Esophagus muscularis mucosa (tissue), 4 donors: ENCODE measurements at regions of chr17 and their contacts with region 1.

Region 1: DNA sequence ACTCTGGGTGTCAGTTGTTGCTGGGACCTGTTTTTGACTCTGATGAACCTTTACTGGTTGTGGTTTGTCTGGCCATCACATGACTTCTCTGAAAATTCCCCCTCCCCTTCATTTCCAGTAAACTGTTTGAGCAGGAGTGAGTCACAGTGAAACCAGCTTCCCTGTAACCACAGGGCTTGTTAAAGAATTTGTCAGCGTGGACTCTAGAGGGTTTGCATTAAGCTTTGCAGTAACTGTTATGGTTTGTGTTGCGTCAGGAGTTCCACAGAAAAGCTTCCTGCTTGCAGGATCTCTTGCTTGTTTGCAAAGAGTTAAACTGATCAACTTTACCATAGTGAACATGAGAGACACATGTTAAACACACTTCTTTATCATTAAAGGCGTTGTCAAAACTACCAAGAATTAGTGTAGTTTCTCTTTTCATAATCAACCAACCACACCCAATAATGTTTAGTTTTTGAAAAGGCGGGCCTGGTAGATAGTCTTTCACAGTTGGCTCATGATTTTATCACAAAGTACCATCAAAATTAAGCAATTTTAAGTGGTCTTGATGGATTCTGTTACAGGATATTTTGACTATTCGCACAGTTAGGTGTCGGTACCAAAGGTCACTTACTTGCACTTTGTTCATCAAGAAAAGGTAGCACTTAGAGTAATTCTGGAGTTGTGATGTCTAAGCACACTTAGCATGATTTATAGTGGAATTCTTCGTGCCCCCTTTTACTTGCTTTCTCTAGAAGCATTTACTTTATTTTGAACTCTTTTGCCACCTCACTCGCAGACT is 79.3 kb downstream of the VMP1 start:
- DNase-seq: peak; percentile 92
- H3K4me3 ChIP-seq: peak overlapping the region; percentile 14 to 34 (median 32)
- H3K27ac ChIP-seq: peak overlapping the region; percentile 71 to 83 (median 77)
- H3K4me1 ChIP-seq: peaks cover 42 to 69% (median 59%) of the 10 kb centered on the region in 4 donors
- H3K27me3 ChIP-seq: no peaks in the 10 kb centered on the region
- CTCF ChIP-seq: no peak
- EP300 ChIP-seq: peak; percentile 94
- POLR2A ChIP-seq: peak; percentile 39

Region 2: DNA sequence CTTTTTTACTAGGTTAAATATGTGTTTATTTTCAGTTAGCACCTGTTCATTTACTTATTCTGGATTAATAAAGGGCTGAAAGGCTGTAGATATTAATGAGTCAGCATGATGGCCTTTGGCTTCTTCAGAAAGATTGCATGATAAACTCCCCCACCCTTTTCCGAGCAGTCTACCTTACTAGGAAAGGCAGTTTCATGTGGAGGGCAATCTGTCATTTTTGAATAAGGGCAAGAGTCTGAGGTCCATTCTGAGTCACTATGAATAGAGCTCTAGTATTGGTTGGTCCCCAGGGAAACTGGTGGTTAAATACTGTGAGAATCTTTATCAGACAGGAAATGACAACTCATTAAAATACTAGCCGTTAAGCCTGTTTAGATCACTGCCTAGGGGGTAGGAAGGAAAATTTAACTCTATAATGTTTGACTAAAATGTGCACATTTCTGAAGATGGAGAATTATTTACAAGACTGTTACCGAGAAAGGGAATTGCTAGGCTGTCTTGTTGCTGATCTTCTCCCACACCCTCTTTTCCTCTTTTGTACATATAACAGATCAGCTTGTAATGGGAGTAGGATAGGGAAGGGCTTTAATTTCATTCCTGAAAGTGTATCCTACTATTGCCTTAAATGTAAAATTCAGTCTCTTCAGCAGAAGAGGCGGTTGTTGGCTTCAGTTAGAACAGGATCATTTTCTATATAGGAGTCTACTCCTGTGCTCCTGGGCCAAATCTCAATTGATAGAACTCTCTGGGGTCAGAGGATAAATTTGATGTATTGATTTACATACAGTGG is 42.7 kb after region 1 on chr17:
- intact Hi-C with region 1: loop called (anchors 5 kb)
- DNase-seq: no peak
- H3K4me3 ChIP-seq: peak overlapping the region in 2 of 4 donors; percentile 4 to 19
- H3K27ac ChIP-seq: peak overlapping the region; percentile 75 to 83 (median 80)
- H3K4me1 ChIP-seq: peaks cover 37 to 84% (median 80%) of the 10 kb centered on the region in 4 donors
- H3K27me3 ChIP-seq: no peaks in the 10 kb centered on the region
- CTCF ChIP-seq: no peak
- EP300 ChIP-seq: peak; percentile 46
- POLR2A ChIP-seq: no peak

Region 3: GRCh38 chr17:59846394-59847165 is 59.9 kb after region 1 on chr17:
- intact Hi-C with region 1: loop called (anchors 5 kb)
- DNase-seq: peak; percentile 95
- H3K4me3 ChIP-seq: peak overlapping the region in 3 of 4 donors; percentile 8 to 30 (median 11)
- H3K27ac ChIP-seq: peak overlapping the region; percentile 87 to 95 (median 91)
- H3K4me1 ChIP-seq: peaks cover 25 to 71% (median 66%) of the 10 kb centered on the region in 4 donors
- H3K27me3 ChIP-seq: no peaks in the 10 kb centered on the region
- CTCF ChIP-seq: peak in 1 of 3 experiments; percentile 8
- EP300 ChIP-seq: no peak
- POLR2A ChIP-seq: no peak